GM23248 (cell line): ENCODE measurements at regions of chr2 and their contacts with region 1.

Region 1: GRCh38 chr2:201171259-201171814 is 11.6 kb upstream of the CASP10 start:
- DNase-seq: no peak
- H3K4me3 ChIP-seq: no peak overlapping the region
- H3K27ac ChIP-seq: no peak overlapping the region
- H3K4me1 ChIP-seq: no peaks in the 10 kb centered on the region
- H3K27me3 ChIP-seq: no peaks in the 10 kb centered on the region

Region 2: GRCh38 chr2:200905618-200906296 is 265.6 kb before region 1 on chr2:
- in situ Hi-C with region 1: loop called (anchors 5 kb)
- DNase-seq: peak; percentile 86
- H3K4me3 ChIP-seq: no peak overlapping the region
- H3K27ac ChIP-seq: no peak overlapping the region
- H3K4me1 ChIP-seq: peaks cover 3% of the 10 kb centered on the region; the same call in 1 of the 2 replicates
- H3K27me3 ChIP-seq: no peaks in the 10 kb centered on the region

Region 3: GRCh38 chr2:201007561-201007998 is 163.8 kb before region 1 on chr2:
- in situ Hi-C with region 1: no loop called
- DNase-seq: no peak
- H3K4me3 ChIP-seq: no peak overlapping the region
- H3K27ac ChIP-seq: no peak overlapping the region
- H3K4me1 ChIP-seq: no peaks in the 10 kb centered on the region
- H3K27me3 ChIP-seq: no peaks in the 10 kb centered on the region

Region 4: GRCh38 chr2:201071479-201072200 is 99.7 kb before region 1 on chr2 and contains the starts of genes HYCC2 and NDUFB3:
- in situ Hi-C with region 1: loop called (anchors 10 kb)
- DNase-seq: peak; percentile 94
- H3K4me3 ChIP-seq: peak within 1 kb of the TSS; percentile 97
- H3K27ac ChIP-seq: peak within 1 kb of the TSS; percentile 71
- H3K4me1 ChIP-seq: peaks cover 39% of the 10 kb centered on the region
- H3K27me3 ChIP-seq: no peaks in the 10 kb centered on the region
- total RNA-seq, gene HYCC2: 5.7 and 12.0 TPM in 2 replicates
- total RNA-seq, gene NDUFB3: 31.0 and 51.3 TPM in 2 replicates